CD8-positive, alpha-beta T cell (primary cell): ENCODE measurements at regions of chr17 and their contacts with region 1.

Region 1: DNA sequence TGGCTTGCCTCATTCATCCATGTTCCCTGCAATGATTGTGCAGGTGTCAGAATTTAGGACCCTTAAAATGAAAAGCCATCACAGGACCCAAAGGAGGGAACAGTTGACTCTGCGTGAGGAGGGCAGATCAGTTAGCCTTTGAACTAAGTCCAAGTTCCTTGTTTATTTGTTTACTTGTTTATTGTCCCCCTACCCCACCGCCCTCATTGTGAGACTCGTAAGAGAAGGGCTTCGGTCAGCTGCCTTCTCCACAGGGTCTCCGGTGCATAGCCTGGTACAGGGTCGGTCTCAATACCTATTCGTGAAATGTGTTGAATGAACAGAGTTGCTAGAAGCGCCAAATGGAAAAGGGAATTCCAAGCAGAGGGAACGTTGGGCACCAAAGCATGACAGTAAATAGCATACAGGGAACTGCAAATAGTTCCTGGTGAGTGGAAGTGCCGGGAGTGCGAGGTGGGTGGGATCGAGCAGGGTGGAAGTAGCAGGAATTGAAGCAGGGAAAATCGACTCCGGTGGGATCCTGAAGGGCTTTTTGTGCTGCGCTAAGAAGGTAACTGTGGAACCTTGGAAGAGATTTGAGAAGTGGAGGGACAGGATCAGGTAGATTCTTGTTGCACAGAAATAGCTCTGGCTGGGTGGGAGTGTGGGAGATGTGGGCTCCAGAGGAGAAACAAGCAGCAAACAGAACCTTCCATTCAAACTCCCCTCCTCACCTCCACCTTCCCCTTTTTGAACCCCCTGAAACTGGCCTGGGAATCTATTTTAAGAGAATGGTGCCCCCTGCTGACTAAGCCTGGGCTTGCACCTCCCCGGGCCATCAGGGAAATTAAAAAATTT is 12.7 kb downstream of the SLC35B1 start:
- DNase-seq: peak; percentile 46 to 83 (median 70)
- ATAC-seq: peak; percentile 41
- H3K4me3 ChIP-seq: no peak overlapping the region
- H3K4me3 Mint-ChIP-seq: peak overlapping the region; percentile 24
- H3K27ac ChIP-seq: peak overlapping the region in 1 of 2 experiments; percentile 78
- H3K27ac Mint-ChIP-seq: peak overlapping the region; percentile 91
- H3K4me1 ChIP-seq: peaks cover 40% of the 10 kb centered on the region
- H3K4me1 Mint-ChIP-seq: peaks cover 56% of the 10 kb centered on the region
- H3K27me3 ChIP-seq: no peaks in the 10 kb centered on the region
- H3K27me3 Mint-ChIP-seq: no peaks in the 10 kb centered on the region
- CTCF ChIP-seq: peak; percentile 87

Region 2: GRCh38 chr17:49496183-49496866 is 198.7 kb before region 1 on chr17:
- CTCF ChIA-PET with region 1: no interaction called
- POLR2A ChIA-PET with region 1: no interaction called
- intact Hi-C with region 1: loop called (anchors 5 to 10 kb)
- DNase-seq: peak; percentile 74 to 91 (median 85)
- ATAC-seq: peak; percentile 83
- H3K4me3 ChIP-seq: peak overlapping the region; percentile 53 to 67
- H3K4me3 Mint-ChIP-seq: peak overlapping the region; percentile 79
- H3K27ac ChIP-seq: no peak overlapping the region
- H3K27ac Mint-ChIP-seq: no peak overlapping the region
- H3K4me1 ChIP-seq: peaks cover 33% of the 10 kb centered on the region
- H3K4me1 Mint-ChIP-seq: peaks cover 28% of the 10 kb centered on the region
- H3K27me3 ChIP-seq: peaks cover 28 to 29% of the 10 kb centered on the region in 2 experiments
- H3K27me3 Mint-ChIP-seq: peaks cover 36% of the 10 kb centered on the region
- CTCF ChIP-seq: peak; percentile 89

Region 3: DNA sequence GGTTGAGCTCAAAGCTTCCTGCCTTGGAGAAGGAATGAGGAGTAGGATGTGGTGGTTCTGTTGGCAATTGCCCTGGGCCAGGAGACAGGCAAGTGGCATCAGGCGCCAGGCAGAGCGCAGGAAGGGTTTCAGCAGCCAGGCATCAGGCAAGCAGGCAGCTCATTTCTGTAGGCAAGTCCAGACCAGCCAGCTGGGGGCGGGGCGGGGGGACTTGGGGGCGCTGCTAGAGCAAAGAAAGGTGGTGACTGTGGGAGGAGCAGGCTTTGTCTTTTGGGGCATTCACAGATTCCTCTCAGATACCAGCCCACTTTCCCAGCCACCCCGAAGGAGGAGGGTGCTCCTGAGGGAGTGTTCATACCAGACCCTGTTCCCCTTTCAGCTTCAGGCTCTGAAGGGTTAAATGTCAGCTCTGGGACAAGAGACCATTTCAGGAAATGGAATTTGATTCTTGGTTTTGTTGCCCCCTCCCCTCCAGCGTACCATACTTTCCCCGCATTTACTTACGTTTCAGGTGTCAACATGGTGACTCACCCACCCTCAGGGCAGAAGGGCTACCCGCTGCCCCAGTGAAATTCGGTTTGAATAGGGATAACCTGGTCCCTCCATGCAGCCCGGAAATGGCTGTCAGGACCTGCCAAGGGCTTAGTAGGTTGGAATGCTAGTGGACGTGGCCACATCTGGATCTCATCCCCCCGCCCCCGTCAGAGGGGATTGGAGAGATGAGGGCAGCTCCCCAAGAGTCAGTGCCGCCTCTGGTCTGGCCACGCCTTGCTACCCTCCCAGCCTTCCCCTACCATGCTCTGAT is 186.8 kb before region 1 on chr17:
- CTCF ChIA-PET with region 1: no interaction called
- POLR2A ChIA-PET with region 1: no interaction called
- intact Hi-C with region 1: no loop called
- DNase-seq: no peak
- ATAC-seq: no peak
- H3K4me3 ChIP-seq: no peak overlapping the region
- H3K4me3 Mint-ChIP-seq: no peak overlapping the region
- H3K27ac ChIP-seq: no peak overlapping the region
- H3K27ac Mint-ChIP-seq: no peak overlapping the region
- H3K4me1 ChIP-seq: no peaks in the 10 kb centered on the region
- H3K4me1 Mint-ChIP-seq: no peaks in the 10 kb centered on the region
- H3K27me3 ChIP-seq: peaks cover under 1 to 9% of the 10 kb centered on the region in 2 experiments
- H3K27me3 Mint-ChIP-seq: peaks cover 39% of the 10 kb centered on the region
- CTCF ChIP-seq: no peak

Region 4: DNA sequence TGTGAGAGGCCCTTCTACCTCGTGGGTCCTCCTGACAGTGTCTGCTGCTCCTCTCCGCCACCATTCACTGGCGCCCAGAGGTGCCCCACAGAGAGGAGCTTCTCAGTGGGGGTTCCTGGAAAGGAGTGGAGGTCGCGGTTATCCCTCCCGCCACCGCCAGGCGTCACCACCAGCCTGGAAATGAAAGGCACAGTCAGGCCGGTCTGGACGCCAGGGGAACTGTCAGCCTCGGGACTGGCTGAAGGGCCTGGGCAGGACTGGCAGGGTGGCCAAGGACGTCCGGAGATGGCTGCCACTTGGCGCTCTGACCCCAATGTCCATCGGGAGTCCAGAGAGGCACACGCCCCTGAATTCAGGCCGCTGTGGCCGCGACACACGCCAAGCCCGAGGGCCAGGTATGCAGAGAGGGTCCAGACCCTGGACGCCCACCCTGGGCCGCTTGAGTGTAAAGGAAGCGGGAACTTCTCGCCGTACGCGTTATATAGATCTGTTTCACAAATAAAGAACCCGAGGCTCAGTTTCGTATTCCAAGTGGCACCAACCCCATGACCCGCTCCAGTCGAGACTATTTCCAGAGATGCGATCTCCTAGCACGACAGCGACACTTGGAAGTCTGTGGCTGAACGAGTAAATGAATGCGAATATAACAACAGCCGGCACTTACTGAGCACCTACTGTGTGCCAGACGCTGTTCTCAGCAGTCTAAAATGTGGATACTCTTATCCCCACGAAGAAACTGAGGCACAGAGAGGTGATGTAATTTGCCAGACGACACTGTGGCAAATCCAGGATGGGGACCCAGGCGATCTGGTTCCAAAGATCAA is 127.0 kb before region 1 on chr17:
- CTCF ChIA-PET with region 1: interaction called, 542 read pairs
- POLR2A ChIA-PET with region 1: interaction called, 5 read pairs
- intact Hi-C with region 1: loop called (anchors 1 kb)
- DNase-seq: peak; percentile 69 to 91 (median 82)
- ATAC-seq: peak; percentile 59
- H3K4me3 ChIP-seq: peak overlapping the region; percentile 6 to 25
- H3K4me3 Mint-ChIP-seq: peak overlapping the region; percentile 62
- H3K27ac ChIP-seq: no peak overlapping the region
- H3K27ac Mint-ChIP-seq: no peak overlapping the region
- H3K4me1 ChIP-seq: peaks cover 12% of the 10 kb centered on the region
- H3K4me1 Mint-ChIP-seq: peaks cover 8% of the 10 kb centered on the region
- H3K27me3 ChIP-seq: no peaks in the 10 kb centered on the region
- H3K27me3 Mint-ChIP-seq: peaks cover 12% of the 10 kb centered on the region
- CTCF ChIP-seq: peak; percentile 96

Region 5: GRCh38 chr17:49575579-49576087 is 119.4 kb before region 1 on chr17 and contains the start of gene NXPH3:
- CTCF ChIA-PET with region 1: interaction called, 542 read pairs
- POLR2A ChIA-PET with region 1: interaction called, 3 read pairs
- intact Hi-C with region 1: loop called (anchors 1 kb)
- DNase-seq: peak; percentile 30 to 72 (median 55)
- ATAC-seq: peak; percentile 82
- H3K4me3 ChIP-seq: peak within 1 kb of the TSS; percentile 33 to 50
- H3K4me3 Mint-ChIP-seq: peak within 1 kb of the TSS; percentile 73
- H3K27ac ChIP-seq: no peak within 1 kb of the TSS
- H3K27ac Mint-ChIP-seq: no peak within 1 kb of the TSS
- H3K4me1 ChIP-seq: peaks cover 15% of the 10 kb centered on the region
- H3K4me1 Mint-ChIP-seq: peaks cover 9% of the 10 kb centered on the region
- H3K27me3 ChIP-seq: peaks cover 20 to 25% of the 10 kb centered on the region in 2 experiments
- H3K27me3 Mint-ChIP-seq: peaks cover 51% of the 10 kb centered on the region
- CTCF ChIP-seq: peak; percentile 39
- total RNA-seq, gene NXPH3: not detected

Region 6: GRCh38 chr17:49634485-49634860 is 60.6 kb before region 1 on chr17:
- CTCF ChIA-PET with region 1: no interaction called
- POLR2A ChIA-PET with region 1: no interaction called
- intact Hi-C with region 1: loop called (anchors 5 kb)
- DNase-seq: no peak
- ATAC-seq: no peak
- H3K4me3 ChIP-seq: no peak overlapping the region
- H3K4me3 Mint-ChIP-seq: no peak overlapping the region
- H3K27ac ChIP-seq: no peak overlapping the region
- H3K27ac Mint-ChIP-seq: no peak overlapping the region
- H3K4me1 ChIP-seq: peaks cover 19% of the 10 kb centered on the region
- H3K4me1 Mint-ChIP-seq: peaks cover 45% of the 10 kb centered on the region
- H3K27me3 ChIP-seq: no peaks in the 10 kb centered on the region
- H3K27me3 Mint-ChIP-seq: no peaks in the 10 kb centered on the region
- CTCF ChIP-seq: no peak

Region 7: DNA sequence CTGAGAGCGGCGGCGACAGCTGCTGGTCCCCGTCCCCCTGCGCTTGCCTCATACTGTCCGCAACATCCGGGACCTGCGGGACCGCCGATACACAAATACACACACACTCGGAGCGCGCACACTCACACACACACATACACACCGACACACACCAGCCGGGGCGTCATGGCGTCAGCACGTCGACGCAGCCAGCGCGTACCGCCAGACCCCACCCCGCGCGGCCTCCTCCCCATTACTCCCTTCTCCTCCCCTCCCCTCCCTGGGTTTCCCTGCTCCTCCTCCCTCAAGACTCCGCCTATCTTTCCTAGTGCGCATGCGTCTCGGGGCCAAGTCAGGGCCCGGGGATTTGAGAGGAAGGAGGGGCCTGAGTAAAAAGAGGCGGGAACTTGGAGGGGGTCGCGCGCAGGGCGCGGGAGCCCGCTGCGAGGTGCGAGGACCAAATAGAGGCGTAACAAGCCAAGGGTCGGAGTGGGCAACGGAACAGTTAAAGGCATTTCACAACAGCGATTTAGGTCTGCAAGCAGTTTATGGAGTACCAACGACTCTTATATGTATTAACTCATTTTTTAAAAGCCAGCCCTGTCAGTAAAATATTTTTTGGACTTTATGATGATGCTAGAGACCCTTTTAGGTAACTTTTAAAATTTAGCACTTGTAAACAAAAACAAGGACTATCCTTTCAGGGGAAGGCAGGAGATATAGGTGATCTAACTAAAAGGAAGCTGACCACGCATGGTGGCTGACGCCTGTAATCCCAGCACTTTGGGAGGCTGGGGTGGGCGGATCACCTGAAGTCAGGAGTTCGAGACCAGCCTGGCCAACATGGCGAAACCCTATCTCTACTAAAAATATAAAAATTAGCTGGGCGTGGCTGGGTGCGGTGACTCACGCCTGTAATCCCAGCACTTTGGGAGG is 16.9 kb before region 1 on chr17 and contains the start of gene SPOP:
- CTCF ChIA-PET with region 1: interaction called, 13 read pairs
- POLR2A ChIA-PET with region 1: interaction called, 5 read pairs
- intact Hi-C with region 1: loop called in 1 of 2 experiments (anchors 2 kb)
- DNase-seq: peak; percentile 97 to 100 (median 99)
- ATAC-seq: peak; percentile 94
- H3K4me3 ChIP-seq: peak within 1 kb of the TSS; percentile 76 to 81
- H3K4me3 Mint-ChIP-seq: peak within 1 kb of the TSS; percentile 97
- H3K27ac ChIP-seq: peak within 1 kb of the TSS; percentile 91 to 98
- H3K27ac Mint-ChIP-seq: peak within 1 kb of the TSS; percentile 100
- H3K4me1 ChIP-seq: peaks cover 29% of the 10 kb centered on the region
- H3K4me1 Mint-ChIP-seq: peaks cover 49% of the 10 kb centered on the region
- H3K27me3 ChIP-seq: no peaks in the 10 kb centered on the region
- H3K27me3 Mint-ChIP-seq: no peaks in the 10 kb centered on the region
- CTCF ChIP-seq: no peak
- total RNA-seq, gene SPOP: 30.5 to 34.3 TPM

Region 8: DNA sequence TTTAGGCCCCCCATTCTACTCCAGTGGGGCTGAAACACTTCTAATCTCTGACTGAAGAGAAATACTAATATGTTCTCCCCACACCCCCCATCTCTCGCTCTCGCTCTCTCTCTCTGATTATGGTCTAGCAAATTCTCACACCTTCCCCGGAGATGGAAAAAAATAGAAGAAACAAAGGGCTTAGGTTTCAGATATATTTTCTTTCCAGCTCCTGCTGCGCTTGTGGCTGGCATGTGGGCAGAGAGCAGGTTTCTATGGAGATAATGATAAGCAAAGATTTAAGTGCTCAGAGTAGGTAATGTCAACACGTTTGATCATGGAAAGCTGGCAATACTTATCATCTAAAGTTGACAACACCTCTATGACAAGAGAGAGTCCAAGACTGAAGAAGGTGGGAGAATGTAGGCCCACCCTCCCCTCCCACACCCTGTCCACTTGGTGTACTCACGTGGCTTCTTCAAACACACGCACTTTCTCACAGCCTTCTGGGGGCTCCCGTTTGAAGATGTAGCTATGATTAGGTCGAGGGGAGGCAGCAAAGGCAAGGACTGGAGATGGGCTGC is 20.7 kb after region 1 on chr17:
- CTCF ChIA-PET with region 1: interaction called, 53 read pairs
- POLR2A ChIA-PET with region 1: interaction called, 3 read pairs
- intact Hi-C with region 1: no loop called
- DNase-seq: peak in 6 of 9 experiments; percentile 27 to 92 (median 58)
- ATAC-seq: peak; percentile 65
- H3K4me3 ChIP-seq: no peak overlapping the region
- H3K4me3 Mint-ChIP-seq: peak overlapping the region; percentile 20
- H3K27ac ChIP-seq: peak overlapping the region; percentile 67 to 91
- H3K27ac Mint-ChIP-seq: peak overlapping the region; percentile 92
- H3K4me1 ChIP-seq: peaks cover 31% of the 10 kb centered on the region
- H3K4me1 Mint-ChIP-seq: peaks cover 41% of the 10 kb centered on the region
- H3K27me3 ChIP-seq: no peaks in the 10 kb centered on the region
- H3K27me3 Mint-ChIP-seq: no peaks in the 10 kb centered on the region
- CTCF ChIP-seq: no peak